Ascending aorta (tissue), 2 donors: ENCODE measurements at regions of chr17 and their contacts with region 1.

Region 1: DNA sequence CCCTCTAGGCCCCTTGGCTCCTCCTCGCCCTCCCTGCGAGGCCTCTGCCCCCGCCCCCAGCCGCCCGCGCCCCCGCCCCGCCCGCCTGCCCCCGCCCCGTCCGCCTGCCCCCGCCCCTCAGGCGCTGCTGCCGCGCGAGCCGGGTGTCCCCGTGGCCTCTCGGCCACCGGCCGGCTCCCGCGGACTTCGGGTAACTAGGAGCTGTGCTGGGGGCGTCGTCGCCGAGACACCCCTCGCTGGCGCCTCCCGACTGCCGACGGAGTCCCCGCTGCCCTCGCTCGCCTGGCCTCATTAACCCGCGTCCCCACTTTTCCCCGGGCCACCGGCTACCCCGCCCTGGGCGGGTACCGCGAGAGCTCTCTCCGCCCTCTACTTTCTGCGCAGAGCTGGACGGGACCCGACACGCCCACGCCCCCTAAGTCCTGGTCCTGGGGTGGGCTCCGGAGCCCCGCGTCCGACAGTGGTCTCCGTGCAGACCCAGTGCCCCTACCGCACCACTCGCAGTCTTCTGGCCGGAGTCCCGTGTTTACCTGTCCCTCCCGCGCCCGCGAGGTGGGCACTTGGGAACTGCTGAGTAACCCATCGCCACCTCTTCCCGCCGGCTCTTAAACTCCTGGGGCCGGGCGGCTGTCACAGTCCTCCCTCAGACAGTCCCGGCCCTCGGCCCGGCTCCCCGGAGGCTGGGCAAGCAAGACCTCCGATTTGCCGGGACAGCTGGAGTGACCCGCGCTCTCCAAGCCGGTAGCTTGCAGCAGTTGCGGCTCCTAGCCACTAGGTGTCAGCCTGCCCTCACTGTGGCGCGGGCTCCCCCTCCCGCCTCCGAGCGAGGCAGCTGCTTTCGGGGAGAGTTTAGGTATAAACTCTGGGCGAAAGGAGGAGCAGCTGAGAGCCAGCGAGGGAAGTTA is at the start of gene TLCD1:
- DNase-seq: peak; percentile 72 to 96
- H3K4me3 ChIP-seq: peak within 1 kb of the TSS; percentile 53 to 83
- H3K27ac ChIP-seq: peak within 1 kb of the TSS; percentile 93 to 95
- H3K4me1 ChIP-seq: peaks cover 13 to 23% of the 10 kb centered on the region in 2 donors
- H3K27me3 ChIP-seq: no peaks in the 10 kb centered on the region
- CTCF ChIP-seq: peak; percentile 99 to 100 (median 100)
- total RNA-seq, gene TLCD1: not detected

Region 2: DNA sequence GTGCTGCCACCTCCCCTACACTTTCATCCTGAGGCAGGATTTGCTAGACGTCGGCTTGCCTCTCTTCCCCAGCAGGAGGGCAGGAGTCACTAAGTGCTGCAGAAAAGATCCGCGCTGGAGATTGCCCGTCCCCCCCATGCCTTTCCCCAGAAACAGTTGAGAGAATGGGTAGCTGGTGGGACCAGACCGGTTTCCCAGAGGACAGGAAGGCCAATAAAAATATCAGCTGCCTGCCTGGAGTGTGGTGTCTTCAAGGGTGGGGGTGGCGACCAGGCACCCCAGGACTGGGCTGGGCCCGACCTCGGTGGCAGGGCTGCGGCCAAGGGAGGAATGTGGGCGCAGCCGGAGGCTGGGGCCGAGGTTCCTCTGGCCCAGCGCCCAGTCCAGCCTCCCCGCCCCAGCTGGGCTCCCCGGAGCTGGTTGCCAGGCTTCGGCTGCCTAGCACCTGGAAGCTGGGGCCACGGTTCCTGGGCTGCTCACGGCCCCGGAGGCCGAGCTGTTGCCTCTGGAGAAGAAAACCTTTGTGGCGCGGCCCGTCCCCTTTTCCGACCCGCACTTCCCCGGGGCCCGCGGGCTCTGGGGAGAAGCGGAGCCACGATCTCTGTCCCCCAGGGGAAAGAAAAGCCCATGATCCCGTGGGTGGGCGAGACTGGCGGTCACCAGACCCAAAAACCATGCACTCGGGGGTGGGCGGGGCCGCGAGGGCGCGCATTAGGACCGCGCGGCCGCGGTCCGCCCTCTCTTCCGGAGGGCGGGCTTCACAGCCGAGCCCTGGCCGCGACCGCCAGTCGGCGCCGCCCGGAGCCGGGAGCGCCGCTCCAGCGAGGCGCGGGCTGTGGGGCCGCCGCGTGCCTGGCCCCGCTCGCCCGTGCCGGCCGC is 17.0 kb after region 1 on chr17 and contains the start of gene TRAF4:
- intact Hi-C with region 1: loop called (anchors 1 kb)
- DNase-seq: peak in 1 of 2 donors; percentile 89
- H3K4me3 ChIP-seq: peak within 1 kb of the TSS; percentile 88 to 91
- H3K27ac ChIP-seq: peak within 1 kb of the TSS; percentile 88 to 98
- H3K4me1 ChIP-seq: peaks cover 15 to 34% of the 10 kb centered on the region in 2 donors
- H3K27me3 ChIP-seq: no peaks in the 10 kb centered on the region
- CTCF ChIP-seq: peak in 2 of 3 experiments; percentile 2 to 75
- total RNA-seq, gene TRAF4: 53.2 TPM

Region 3: GRCh38 chr17:28763804-28764266 is 37.4 kb after region 1 on chr17:
- intact Hi-C with region 1: loop called (anchors 5 kb)
- DNase-seq: peak in 1 of 2 donors; percentile 91
- H3K4me3 ChIP-seq: no peak overlapping the region
- H3K27ac ChIP-seq: no peak overlapping the region
- H3K4me1 ChIP-seq: no peaks in the 10 kb centered on the region
- H3K27me3 ChIP-seq: no peaks in the 10 kb centered on the region
- CTCF ChIP-seq: peak; percentile 70 to 88 (median 84)

Region 4: DNA sequence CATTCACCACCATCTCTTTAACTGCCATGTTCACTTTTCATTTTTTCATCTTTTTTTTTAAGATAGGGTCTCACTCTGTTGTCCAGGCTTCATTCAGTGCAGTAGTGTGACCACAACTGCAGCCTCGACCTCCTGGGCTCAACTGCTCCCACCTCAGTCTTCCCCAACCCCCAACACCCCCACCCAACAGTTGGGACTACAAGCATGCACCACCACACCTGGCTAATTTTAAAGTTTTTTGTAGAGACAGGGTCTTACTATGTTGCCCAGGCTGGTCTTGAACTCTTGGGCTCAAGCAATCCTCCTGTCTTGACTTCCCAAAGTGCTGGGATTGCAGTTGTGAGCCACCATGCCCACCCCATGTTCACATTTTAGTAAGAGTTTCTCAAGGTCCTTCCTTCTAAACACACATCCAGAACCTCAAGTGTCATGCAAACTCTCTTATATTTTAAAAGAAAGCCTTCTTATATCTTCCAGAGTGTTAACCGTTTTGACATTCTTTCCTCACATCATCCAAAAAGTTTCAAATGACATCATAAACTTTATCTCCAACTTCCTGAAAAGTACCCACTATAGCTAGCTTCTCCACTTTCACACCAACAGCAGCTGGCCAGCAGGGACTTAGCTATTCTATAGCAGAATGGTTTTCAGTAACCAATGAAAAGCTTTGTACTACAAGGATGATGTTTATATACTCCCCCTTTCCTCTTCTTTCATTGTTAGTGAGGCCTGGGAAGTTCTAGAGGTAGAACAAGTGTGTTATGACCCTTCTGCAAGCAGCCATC is 66.6 kb after region 1 on chr17:
- intact Hi-C with region 1: no loop called
- DNase-seq: no peak
- H3K4me3 ChIP-seq: no peak overlapping the region
- H3K27ac ChIP-seq: no peak overlapping the region
- H3K4me1 ChIP-seq: no peaks in the 10 kb centered on the region
- H3K27me3 ChIP-seq: no peaks in the 10 kb centered on the region
- CTCF ChIP-seq: no peak

Region 5: DNA sequence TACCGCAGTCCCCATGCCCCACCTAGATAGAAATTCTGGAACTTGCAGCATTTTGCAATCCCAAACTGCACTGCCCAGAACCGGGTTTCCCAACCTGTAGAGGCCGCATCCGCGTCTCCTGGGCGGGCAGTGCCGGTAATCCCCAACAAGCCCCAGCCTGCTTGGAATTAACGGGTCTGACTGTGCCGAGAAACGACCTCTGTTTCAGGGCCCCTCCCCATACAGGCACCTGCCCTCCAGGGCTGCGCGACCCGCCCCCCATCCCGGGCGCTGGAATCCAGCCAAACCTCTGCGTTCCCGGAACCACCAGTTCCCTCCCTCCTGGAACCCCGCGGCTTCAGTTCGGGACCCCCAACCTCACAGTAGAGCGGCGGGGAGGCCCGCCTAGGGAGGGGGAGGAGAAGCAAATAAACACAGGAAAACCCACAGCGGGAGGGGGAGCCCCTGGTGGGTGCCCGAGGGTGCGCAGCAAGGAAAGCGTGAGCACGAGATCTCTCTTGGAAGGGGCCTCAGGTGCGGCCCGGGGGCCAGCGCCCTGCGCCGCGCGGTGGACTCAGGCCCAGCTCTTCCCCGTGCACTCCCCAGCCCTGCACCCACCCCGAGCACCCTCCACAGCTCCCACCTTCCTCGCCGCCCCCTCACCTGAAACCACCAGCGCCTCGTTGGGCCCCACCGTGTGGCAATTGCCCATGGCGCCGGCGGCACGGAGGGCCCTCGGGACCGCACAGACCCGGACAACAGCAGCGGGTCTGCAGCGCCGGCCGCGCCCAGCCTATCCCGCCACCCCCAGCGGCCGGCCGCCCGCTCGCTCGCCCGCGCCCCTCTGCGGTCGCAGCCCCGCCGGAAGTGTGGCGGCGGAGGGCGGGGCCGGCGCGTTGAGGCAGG is 170.6 kb after region 1 on chr17 and contains the start of gene FLOT2:
- intact Hi-C with region 1: loop called (anchors 5 kb)
- DNase-seq: peak in 1 of 2 donors; percentile 87
- H3K4me3 ChIP-seq: peak within 1 kb of the TSS; percentile 63 to 87
- H3K27ac ChIP-seq: peak within 1 kb of the TSS; percentile 93 to 95
- H3K4me1 ChIP-seq: peaks cover 3 to 42% of the 10 kb centered on the region in 2 donors
- H3K27me3 ChIP-seq: no peaks in the 10 kb centered on the region
- CTCF ChIP-seq: peak; percentile 5 to 20 (median 16)
- total RNA-seq, gene FLOT2: 72.4 TPM

Region 6: DNA sequence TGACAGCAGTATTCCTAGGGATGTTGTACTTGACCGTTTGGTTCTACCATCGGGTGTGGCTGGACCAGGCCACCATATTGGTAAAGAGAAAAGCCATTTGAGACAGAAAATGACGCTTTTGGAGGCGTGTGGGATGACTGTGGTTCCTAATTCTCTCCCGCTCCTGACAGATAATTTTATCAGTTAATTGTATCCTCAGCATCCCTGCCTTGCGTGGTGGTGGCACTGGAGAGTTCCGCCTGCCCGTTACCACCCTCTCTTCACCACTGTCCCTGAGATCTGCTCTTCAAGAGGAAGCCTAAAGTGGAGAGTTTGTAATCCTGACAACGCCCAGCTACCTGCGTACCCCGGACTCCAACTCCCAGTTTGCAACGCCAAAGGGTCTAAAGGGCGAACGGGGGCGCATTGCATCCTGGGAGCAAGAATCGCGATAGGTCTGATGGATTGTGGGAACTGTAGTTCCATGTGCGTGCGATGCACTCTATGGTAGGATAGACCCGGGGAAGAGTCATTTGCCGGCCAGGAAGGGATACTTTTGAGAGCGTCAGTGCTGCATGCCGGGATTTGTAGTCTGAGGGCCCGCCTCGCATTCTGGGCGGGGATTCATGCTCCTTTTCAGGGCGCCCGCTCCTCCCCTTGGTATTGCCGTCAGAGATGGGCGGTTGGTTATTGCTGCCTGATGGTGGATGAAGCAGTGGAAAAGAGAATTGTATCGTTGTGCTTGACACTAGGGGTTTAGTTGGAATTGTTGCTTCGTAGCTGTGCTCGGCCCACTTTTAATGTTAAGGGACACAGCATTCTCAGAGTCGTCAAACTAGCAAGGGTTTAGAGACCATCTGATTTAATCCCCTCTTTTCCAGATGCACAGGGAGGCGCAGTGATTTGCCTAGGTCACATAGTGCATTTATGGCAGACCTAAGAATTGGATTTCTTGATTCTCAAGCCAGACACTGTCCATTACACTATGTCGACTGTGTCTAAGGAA is 225.8 kb after region 1 on chr17:
- intact Hi-C with region 1: loop called (anchors 1 kb)
- DNase-seq: peak; percentile 98 to 99
- H3K4me3 ChIP-seq: peak overlapping the region; percentile 47 to 71
- H3K27ac ChIP-seq: peak overlapping the region; percentile 93 to 95
- H3K4me1 ChIP-seq: peaks cover 2 to 13% of the 10 kb centered on the region in 2 donors
- H3K27me3 ChIP-seq: no peaks in the 10 kb centered on the region
- CTCF ChIP-seq: no peak